A673 (cell line): ENCODE measurements at regions of chr9 and their contacts with region 1.

Region 1: GRCh38 chr9:36987891-36988290 is 46.2 kb downstream of the PAX5 start:
- DNase-seq: no peak
- H3K4me3 ChIP-seq: no peak overlapping the region
- H3K27ac ChIP-seq: no peak overlapping the region
- H3K4me1 ChIP-seq: peaks cover 6% of the 10 kb centered on the region
- H3K27me3 ChIP-seq: no peaks in the 10 kb centered on the region
- CTCF ChIP-seq: no peak

Region 2: GRCh38 chr9:36974731-36975130 is 13.2 kb before region 1 on chr9:
- CTCF ChIA-PET with region 1: interaction called, 10 read pairs
- POLR2A ChIA-PET with region 1: no interaction called
- intact Hi-C with region 1: no loop called
- DNase-seq: no peak
- H3K4me3 ChIP-seq: no peak overlapping the region
- H3K27ac ChIP-seq: no peak overlapping the region
- H3K4me1 ChIP-seq: peaks cover 5% of the 10 kb centered on the region
- H3K27me3 ChIP-seq: no peaks in the 10 kb centered on the region
- CTCF ChIP-seq: peak; percentile 33